Calu3 (cell line): ENCODE measurements at regions of chr15 and their contacts with region 1.

Region 1: GRCh38 chr15:73633111-73633990 is at the start of gene NPTN:
- DNase-seq: peak; percentile 100
- H3K4me3 Mint-ChIP-seq: peak within 1 kb of the TSS; percentile 70
- H3K27ac Mint-ChIP-seq: peak within 1 kb of the TSS; percentile 88
- H3K4me1 Mint-ChIP-seq: peaks cover 53% of the 10 kb centered on the region
- H3K27me3 Mint-ChIP-seq: peaks cover 21% of the 10 kb centered on the region
- CTCF ChIP-seq: no peak
- total RNA-seq, gene NPTN: 190 TPM in 2 replicates

Region 2: DNA sequence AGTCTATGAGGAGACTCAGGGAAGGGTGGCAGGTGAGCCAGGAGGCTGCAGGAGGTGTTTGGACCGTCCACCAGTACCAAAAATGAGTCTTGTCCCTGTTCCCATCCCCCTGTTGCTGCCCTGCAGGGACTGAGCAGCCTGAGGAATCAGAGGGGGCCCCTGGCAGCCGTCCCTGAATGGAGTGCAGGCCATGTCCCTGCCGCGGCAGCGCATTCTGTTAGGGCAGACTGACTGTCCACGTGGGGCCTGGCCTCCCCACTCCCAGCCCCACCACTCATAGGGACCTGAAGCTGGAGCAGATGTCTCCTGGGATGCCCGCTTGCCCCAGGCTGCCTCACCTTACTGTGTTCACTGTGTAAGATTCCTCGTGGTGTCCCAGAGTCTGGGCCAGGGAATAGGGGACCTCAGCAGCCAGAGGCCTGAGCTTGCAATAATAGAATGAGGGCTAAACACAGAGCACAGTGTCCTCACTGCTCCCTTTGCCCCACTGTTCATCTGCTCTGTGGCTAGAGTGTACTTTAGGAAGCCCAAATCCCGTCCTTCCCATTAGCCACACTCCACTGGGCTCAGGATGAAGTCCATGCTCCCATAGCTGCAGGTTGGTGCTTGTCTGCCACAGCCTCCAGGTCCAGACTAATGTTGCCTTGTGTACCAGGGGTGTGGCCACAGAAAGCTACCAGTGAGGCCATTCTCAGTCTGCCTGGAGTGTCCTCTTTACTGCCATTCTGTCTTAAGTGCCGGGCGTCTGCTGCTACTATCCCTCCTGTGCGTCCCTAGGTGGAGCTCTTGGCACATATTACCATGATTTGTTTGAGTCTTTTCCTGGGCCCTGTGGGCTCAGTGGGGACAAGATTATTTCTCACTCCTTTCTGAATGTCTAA is 327.8 kb before region 1 on chr15:
- CTCF ChIA-PET with region 1: interaction called, 11 read pairs
- intact Hi-C with region 1: loop called (anchors 1 kb)
- DNase-seq: peak; percentile 64
- H3K4me3 Mint-ChIP-seq: no peak overlapping the region
- H3K27ac Mint-ChIP-seq: no peak overlapping the region
- H3K4me1 Mint-ChIP-seq: no peaks in the 10 kb centered on the region
- H3K27me3 Mint-ChIP-seq: no peaks in the 10 kb centered on the region
- CTCF ChIP-seq: peak; percentile 54

Region 3: GRCh38 chr15:73677146-73677607 is 43.8 kb after region 1 on chr15:
- CTCF ChIA-PET with region 1: interaction called, 12 read pairs
- intact Hi-C with region 1: loop called (anchors 2 kb)
- DNase-seq: peak; percentile 79
- H3K4me3 Mint-ChIP-seq: no peak overlapping the region
- H3K27ac Mint-ChIP-seq: no peak overlapping the region
- H3K4me1 Mint-ChIP-seq: no peaks in the 10 kb centered on the region
- H3K27me3 Mint-ChIP-seq: peaks cover 28% of the 10 kb centered on the region
- CTCF ChIP-seq: peak; percentile 88

Region 4: DNA sequence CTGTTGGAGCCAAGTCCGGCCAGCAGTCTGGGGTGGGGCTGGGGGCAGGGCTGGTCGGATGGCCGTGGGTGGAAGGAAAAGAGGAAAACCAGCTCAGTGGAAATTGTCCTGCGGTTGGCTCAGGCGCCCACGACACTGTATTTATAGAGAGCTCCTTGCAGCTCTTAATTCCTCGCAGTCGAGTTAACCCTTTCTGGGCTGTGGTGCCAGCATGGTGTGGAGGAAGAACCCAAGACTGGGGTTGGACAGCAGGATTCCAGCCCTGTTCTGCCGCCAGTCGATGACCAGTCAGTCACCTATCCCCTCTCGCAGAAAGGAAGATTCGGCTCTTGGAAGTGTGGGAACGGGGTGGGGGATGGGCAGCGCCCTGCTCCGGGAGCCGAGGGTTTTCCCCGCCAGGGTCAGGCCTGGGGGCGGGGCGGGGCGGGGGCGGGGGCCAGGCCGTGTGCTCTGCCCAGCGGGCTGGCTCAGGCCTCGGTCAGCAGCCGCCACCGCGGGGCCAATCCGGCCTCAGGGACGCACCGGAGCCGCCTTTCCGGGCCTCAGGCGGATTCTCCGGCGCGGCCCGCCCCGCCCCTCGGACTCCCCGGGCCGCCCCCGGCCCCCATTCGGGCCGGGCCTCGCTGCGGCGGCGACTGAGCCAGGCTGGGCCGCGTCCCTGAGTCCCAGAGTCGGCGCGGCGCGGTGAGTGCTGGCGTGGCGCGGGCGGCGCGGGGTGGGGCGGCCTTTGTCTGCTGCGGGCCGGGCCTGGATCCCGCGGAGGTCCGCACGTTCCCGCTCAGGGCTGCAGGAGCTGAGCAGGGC is 50.6 kb after region 1 on chr15 and contains the start of gene CD276:
- CTCF ChIA-PET with region 1: interaction called, 14 read pairs
- intact Hi-C with region 1: no loop called
- DNase-seq: peak; percentile 83
- H3K4me3 Mint-ChIP-seq: peak within 1 kb of the TSS; percentile 88
- H3K27ac Mint-ChIP-seq: peak within 1 kb of the TSS; percentile 29
- H3K4me1 Mint-ChIP-seq: peaks cover 35% of the 10 kb centered on the region
- H3K27me3 Mint-ChIP-seq: peaks cover 25% of the 10 kb centered on the region
- CTCF ChIP-seq: peak; percentile 31
- total RNA-seq, gene CD276: 83.7 and 84.6 TPM in 2 replicates

Region 5: DNA sequence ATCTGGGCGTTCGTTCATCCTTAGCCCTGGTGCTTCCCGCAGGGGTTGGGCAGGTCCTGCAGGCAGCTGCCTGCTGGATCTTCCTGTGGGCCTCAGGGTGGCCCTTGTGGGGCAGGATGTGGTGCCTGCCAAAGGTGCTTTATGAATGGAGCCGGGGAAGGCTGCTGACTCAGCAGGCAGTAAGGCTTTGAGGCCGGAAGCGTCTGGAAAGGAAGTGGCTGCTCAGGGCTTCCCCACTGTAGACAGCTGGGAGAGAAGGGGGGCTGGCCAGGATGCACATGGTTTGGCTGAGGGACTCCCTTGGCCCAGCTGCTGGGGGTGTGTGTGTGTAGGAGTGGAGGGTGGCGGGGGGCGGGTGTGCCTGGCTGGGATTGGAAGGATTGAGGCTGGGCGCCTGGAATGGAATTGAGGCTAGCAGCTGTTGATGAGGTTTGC is 63.7 kb after region 1 on chr15:
- CTCF ChIA-PET with region 1: interaction called, 52 read pairs
- intact Hi-C with region 1: loop called (anchors 1 kb)
- DNase-seq: no peak
- H3K4me3 Mint-ChIP-seq: no peak overlapping the region
- H3K27ac Mint-ChIP-seq: no peak overlapping the region
- H3K4me1 Mint-ChIP-seq: peaks cover 10% of the 10 kb centered on the region
- H3K27me3 Mint-ChIP-seq: no peaks in the 10 kb centered on the region
- CTCF ChIP-seq: no peak

Region 6: DNA sequence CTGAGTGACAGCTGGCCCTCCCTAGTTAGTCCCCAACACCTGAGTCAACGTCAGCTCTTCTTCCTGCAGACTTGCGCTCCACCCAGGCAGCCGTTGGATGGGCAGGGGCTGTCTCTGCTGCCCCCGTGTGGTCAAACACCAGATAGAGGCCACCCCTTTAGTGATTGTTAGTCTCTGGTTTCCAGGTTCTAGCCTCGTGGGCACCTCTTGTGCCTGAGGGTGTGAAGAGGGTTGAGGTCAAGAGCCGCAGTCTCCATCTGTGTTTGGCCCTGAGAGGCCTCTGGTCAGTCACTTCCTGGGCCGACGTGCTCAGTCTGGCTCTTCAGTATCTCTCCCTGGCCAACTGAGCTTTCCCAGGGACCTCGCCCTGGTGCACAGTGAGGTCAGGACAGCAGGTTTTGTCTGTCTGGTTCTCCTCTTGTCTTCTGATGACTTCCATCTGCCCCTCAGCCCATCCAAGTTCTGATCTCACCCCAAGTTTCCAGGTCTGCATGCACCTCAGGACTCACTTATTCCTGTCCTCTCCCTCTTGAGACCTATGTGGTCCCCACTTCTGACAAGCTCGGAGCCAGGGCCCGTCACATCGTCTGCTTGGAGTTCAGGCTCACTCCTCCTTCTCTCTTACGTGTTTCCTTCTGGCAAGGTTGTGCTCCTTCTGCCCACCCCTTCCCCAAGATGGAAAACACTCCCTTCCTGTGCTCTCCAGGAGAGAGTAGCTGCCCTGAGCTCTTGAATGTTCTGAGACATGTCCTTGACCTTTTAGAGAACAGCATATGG is 71.7 kb after region 1 on chr15:
- CTCF ChIA-PET with region 1: interaction called, 52 read pairs
- intact Hi-C with region 1: loop called (anchors 1 kb)
- DNase-seq: peak; percentile 74
- H3K4me3 Mint-ChIP-seq: no peak overlapping the region
- H3K27ac Mint-ChIP-seq: no peak overlapping the region
- H3K4me1 Mint-ChIP-seq: no peaks in the 10 kb centered on the region
- H3K27me3 Mint-ChIP-seq: no peaks in the 10 kb centered on the region
- CTCF ChIP-seq: peak; percentile 81